ENCODE measurements at regions of chr19 and their contacts with region 1.

Region 1: DNA sequence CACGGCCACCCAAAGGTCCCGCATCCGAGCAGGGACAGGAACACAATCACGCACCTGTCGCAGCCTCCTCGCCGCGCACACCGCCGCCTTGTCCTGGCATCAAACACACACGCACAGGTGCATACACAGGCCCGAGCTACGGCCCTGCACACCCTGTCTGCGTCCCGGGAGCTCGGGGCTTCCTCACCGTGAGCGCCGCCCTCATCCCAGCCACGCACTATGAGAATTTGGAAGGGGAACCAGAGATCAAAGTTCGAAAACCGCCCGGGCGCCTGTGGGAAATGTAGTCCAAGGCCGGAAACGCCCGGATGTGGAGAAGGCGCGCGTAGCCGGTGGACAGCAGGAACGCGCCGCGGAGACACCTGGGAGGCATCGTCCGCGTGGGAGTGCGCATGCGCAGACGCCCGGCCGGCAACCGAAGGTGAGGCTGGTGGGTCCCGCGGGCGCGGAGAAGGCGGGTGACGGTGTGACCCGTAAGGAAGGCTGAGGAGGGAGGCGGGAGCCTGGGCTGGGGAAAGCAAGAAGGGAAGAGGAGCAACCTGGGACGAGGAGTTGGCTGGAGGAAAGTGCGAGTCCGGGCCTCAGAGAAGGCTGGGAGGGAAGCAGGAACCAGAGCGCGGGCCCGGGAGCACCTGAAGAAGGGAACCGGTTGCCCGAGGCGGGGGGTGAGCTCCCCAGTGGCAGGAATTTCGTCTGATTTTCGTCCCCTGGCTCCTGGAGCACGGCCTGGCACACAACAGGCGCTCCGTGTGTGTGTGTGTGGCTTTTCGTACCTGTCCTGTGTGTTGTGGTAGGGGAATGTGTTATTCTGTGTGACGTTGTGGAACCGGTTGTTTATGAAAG is at the start of gene ZNF567:
- DNase-seq: peak; percentile 98
- H3K4me3 Mint-ChIP-seq: peak within 1 kb of the TSS; percentile 88
- H3K27ac Mint-ChIP-seq: peak within 1 kb of the TSS; percentile 90
- H3K4me1 Mint-ChIP-seq: peaks cover 26% of the 10 kb centered on the region
- H3K27me3 Mint-ChIP-seq: no peaks in the 10 kb centered on the region
- total RNA-seq, gene ZNF567: 6.0 to 6.8 TPM

Region 2: GRCh38 chr19:36418287-36419001 is 269.0 kb before region 1 on chr19 and contains the start of gene ZFP82:
- CTCF ChIA-PET with region 1: no interaction called
- intact Hi-C with region 1: loop called (anchors 1 kb)
- DNase-seq: peak; percentile 81
- H3K4me3 Mint-ChIP-seq: peak within 1 kb of the TSS; percentile 92
- H3K27ac Mint-ChIP-seq: peak within 1 kb of the TSS; percentile 92
- H3K4me1 Mint-ChIP-seq: peaks cover 19% of the 10 kb centered on the region
- H3K27me3 Mint-ChIP-seq: peaks cover 18% of the 10 kb centered on the region
- total RNA-seq, gene ZFP82: 2.4 to 2.6 TPM

Region 3: GRCh38 chr19:36573020-36573885 is 114.2 kb before region 1 on chr19 and contains the start of gene ZNF529:
- CTCF ChIA-PET with region 1: no interaction called
- intact Hi-C with region 1: loop called (anchors 1 kb)
- DNase-seq: peak; percentile 90
- H3K4me3 Mint-ChIP-seq: peak within 1 kb of the TSS; percentile 80
- H3K27ac Mint-ChIP-seq: peak within 1 kb of the TSS; percentile 85
- H3K4me1 Mint-ChIP-seq: peaks cover 20% of the 10 kb centered on the region
- H3K27me3 Mint-ChIP-seq: no peaks in the 10 kb centered on the region
- total RNA-seq, gene ZNF529: 17.1 to 18.3 TPM

Region 4: DNA sequence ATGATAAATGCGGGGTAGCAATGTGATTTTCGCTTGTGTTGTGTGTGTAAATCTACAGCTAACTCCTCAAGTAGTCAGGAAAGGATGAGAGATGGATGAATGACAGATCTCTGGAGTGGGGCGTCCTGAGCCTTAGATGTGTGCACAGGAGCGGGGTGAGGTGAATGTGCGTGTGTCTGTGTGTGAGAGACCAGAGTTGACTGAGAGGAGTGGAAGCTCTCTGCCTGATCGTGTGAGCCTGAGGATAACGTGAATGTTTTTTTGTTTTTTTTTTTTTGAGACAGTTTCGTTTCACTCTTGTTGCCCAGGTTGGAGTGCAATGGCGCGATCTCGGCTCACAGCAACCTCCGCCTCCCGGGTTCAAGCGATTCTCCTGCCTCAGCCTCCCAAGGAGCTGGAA is 21.6 kb before region 1 on chr19:
- CTCF ChIA-PET with region 1: no interaction called
- intact Hi-C with region 1: loop called (anchors 1 kb)
- DNase-seq: no peak
- H3K4me3 Mint-ChIP-seq: peak overlapping the region; percentile 91
- H3K27ac Mint-ChIP-seq: no peak overlapping the region
- H3K4me1 Mint-ChIP-seq: peaks cover 20% of the 10 kb centered on the region
- H3K27me3 Mint-ChIP-seq: no peaks in the 10 kb centered on the region